ENCODE measurements at regions of chr3 and their contacts with region 1.

Region 1: DNA sequence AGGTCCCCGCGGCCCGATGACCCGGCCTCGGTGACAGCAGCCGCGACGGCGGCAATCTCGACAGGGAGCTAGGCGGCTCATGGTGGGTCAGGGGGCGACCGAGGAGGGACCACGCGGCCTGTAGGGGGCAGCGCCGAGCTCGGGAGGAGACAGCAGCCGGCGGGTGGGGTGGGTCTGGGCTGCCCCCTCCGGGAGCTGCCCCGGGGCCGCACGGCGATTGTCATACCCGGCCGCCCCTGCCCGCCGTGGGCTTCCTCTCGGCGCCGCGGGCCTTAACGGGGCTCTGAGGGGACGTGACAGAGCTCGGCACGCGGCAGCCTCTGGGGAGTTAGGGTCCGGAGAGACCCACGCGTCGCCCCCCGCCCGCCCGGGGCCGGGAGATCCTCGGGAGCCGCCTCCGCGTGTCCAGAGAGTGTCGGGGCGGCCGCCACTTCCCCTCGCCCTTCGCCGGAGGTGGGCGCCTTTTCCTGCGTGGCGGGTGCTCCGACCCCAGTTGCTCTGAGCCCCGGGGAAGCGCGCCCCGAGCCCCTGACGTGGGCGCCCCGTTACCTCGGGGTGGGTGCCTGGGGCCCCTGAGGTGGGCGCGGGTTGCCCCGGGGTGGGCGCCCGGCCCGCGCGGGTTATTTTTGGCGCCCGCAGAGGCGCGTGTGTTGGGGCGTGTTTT is 539 bp upstream of the PLCL2 start:
- DNase-seq: peak; percentile 84
- ATAC-seq: peak; percentile 60
- H3K4me3 ChIP-seq: peak overlapping the region in 4 of 5 experiments; percentile 77 to 98 (median 96)
- H3K4me3 Mint-ChIP-seq: peak overlapping the region; percentile 97
- H3K27ac ChIP-seq: peak overlapping the region; percentile 82 to 90
- H3K27ac Mint-ChIP-seq: peak overlapping the region; percentile 95
- H3K4me1 ChIP-seq: peaks cover 17 to 23% of the 10 kb centered on the region in 2 donors
- H3K4me1 Mint-ChIP-seq: peaks cover 40% of the 10 kb centered on the region
- H3K27me3 ChIP-seq: no peaks in the 10 kb centered on the region
- H3K27me3 Mint-ChIP-seq: no peaks in the 10 kb centered on the region
- CTCF ChIP-seq: peak; percentile 71

Region 2: DNA sequence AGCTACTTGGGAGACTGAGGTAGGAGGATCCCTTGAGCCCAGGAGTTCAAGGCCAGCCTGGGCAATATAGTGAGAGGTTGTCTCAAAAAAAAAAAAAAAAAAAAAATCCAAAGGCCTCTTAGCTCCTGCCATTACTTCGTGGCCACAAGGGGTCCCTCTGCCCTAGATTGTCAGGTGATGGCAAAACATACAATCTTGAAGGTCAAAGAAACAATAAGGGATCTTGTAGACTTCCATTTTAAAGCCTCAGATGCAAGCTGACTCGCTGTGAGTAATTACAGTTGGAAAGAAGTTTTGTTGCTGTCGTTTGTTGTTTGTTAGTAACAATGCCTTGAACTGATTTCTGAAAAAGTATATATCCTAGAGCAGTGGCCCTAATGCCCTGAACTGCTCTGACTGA is 55.4 kb before region 1 on chr3:
- CTCF ChIA-PET with region 1: interaction called, 4 read pairs
- POLR2A ChIA-PET with region 1: interaction called, 3 read pairs
- intact Hi-C with region 1: loop called (anchors 5 kb)
- DNase-seq: peak; percentile 71
- ATAC-seq: peak; percentile 60
- H3K4me3 ChIP-seq: no peak overlapping the region
- H3K4me3 Mint-ChIP-seq: no peak overlapping the region
- H3K27ac ChIP-seq: no peak overlapping the region
- H3K27ac Mint-ChIP-seq: no peak overlapping the region
- H3K4me1 ChIP-seq: peaks cover 11 to 12% of the 10 kb centered on the region in 2 donors
- H3K4me1 Mint-ChIP-seq: peaks cover 15% of the 10 kb centered on the region
- H3K27me3 ChIP-seq: no peaks in the 10 kb centered on the region
- H3K27me3 Mint-ChIP-seq: no peaks in the 10 kb centered on the region
- CTCF ChIP-seq: peak; percentile 62

Region 3: DNA sequence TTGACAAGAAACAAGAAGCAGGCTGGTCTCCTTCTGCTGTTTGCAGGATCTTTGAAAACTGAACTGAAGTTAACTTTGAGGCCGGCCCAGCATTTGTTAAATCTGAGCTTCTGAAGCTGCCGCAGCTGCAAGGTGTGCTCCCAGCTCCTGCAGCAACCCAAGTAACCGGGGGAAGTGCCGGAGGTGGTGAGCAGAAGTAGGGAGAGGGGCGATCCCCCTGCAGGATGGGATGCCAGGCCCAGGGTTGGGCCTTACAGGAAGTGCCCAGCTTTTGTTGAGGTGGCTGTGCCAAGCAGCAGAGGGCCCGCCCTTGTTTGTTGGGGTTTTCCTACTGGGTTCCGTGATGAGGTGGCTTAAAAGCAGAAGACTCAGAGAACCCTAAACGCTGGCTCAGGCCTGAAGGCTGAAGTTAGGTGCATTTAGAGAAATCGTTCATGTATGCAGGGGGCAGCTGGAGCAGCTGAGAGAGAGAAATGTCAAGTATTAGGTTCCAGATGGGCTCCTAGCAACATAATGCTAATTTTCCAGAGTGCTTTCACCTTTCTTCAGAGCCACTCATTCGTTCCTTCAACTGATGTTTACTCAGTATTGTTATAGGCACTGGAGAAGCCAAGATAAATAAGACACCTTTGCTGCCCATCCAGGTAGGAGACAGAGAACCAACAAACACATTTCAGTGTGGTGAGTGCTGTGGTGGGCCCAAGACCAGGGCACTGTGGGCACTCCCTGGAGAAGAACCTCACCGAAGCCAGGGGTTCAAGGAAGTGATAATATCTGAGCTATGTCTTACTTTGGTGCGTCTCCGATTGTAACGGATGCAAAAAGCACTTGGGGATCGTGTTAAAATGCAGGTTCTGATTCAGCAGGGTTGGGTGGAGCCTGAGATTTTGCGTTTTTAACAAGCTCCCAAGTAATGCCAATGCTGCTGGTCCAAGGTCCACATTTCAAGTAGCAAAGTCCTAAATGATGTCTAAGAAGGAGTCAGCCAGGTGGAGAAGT is 41.6 kb before region 1 on chr3:
- CTCF ChIA-PET with region 1: interaction called, 13 read pairs
- POLR2A ChIA-PET with region 1: interaction called, 22 read pairs
- intact Hi-C with region 1: loop called (anchors 1 kb)
- DNase-seq: peak; percentile 90
- ATAC-seq: peak; percentile 89
- H3K4me3 ChIP-seq: peak overlapping the region in 4 of 5 experiments; percentile 12 to 50 (median 36)
- H3K4me3 Mint-ChIP-seq: peak overlapping the region; percentile 65
- H3K27ac ChIP-seq: peak overlapping the region; percentile 93 to 97
- H3K27ac Mint-ChIP-seq: peak overlapping the region; percentile 95
- H3K4me1 ChIP-seq: peaks cover 51 to 52% of the 10 kb centered on the region in 2 donors
- H3K4me1 Mint-ChIP-seq: peaks cover 66% of the 10 kb centered on the region
- H3K27me3 ChIP-seq: no peaks in the 10 kb centered on the region
- H3K27me3 Mint-ChIP-seq: no peaks in the 10 kb centered on the region
- CTCF ChIP-seq: no peak

Region 4: GRCh38 chr3:16897254-16897926 is 13.2 kb after region 1 on chr3:
- CTCF ChIA-PET with region 1: interaction called, 23 read pairs
- POLR2A ChIA-PET with region 1: interaction called, 8 read pairs
- intact Hi-C with region 1: loop called (anchors 1 kb)
- DNase-seq: peak; percentile 77
- ATAC-seq: peak; percentile 88
- H3K4me3 ChIP-seq: peak overlapping the region in 4 of 5 experiments; percentile 1 to 48 (median 12)
- H3K4me3 Mint-ChIP-seq: peak overlapping the region; percentile 75
- H3K27ac ChIP-seq: peak overlapping the region; percentile 45 to 80
- H3K27ac Mint-ChIP-seq: peak overlapping the region; percentile 87
- H3K4me1 ChIP-seq: peaks cover 76 to 92% of the 10 kb centered on the region in 2 donors
- H3K4me1 Mint-ChIP-seq: peaks cover 88% of the 10 kb centered on the region
- H3K27me3 ChIP-seq: no peaks in the 10 kb centered on the region
- H3K27me3 Mint-ChIP-seq: no peaks in the 10 kb centered on the region
- CTCF ChIP-seq: no peak

Region 5: DNA sequence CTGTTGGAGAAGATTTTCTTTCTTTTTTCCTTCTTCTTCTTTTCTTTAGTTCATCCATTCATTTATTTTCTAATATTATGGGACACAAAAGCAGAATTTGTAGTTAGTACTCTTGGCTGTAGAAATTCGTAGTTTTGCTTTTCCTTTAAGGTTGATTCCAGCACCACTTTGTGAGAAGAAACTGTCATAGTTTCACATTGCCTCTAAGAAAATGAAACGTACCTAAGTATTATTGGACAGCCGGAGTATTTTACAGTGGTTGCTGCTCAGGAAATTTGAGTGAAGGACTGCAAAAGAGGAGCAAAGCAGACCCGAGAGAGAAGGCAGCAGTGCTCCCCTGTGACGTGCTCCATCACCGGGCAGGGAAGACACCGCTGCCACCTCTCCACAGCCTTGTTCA is 48.7 kb after region 1 on chr3:
- CTCF ChIA-PET with region 1: interaction called, 3 read pairs
- POLR2A ChIA-PET with region 1: no interaction called
- intact Hi-C with region 1: loop called (anchors 10 kb)
- DNase-seq: no peak
- ATAC-seq: no peak
- H3K4me3 ChIP-seq: no peak overlapping the region
- H3K4me3 Mint-ChIP-seq: no peak overlapping the region
- H3K27ac ChIP-seq: peak overlapping the region in 1 of 2 donors; percentile 33
- H3K27ac Mint-ChIP-seq: peak overlapping the region; percentile 57
- H3K4me1 ChIP-seq: peaks cover 37 to 54% of the 10 kb centered on the region in 2 donors
- H3K4me1 Mint-ChIP-seq: peaks cover 87% of the 10 kb centered on the region
- H3K27me3 ChIP-seq: no peaks in the 10 kb centered on the region
- H3K27me3 Mint-ChIP-seq: no peaks in the 10 kb centered on the region
- CTCF ChIP-seq: no peak

Region 6: DNA sequence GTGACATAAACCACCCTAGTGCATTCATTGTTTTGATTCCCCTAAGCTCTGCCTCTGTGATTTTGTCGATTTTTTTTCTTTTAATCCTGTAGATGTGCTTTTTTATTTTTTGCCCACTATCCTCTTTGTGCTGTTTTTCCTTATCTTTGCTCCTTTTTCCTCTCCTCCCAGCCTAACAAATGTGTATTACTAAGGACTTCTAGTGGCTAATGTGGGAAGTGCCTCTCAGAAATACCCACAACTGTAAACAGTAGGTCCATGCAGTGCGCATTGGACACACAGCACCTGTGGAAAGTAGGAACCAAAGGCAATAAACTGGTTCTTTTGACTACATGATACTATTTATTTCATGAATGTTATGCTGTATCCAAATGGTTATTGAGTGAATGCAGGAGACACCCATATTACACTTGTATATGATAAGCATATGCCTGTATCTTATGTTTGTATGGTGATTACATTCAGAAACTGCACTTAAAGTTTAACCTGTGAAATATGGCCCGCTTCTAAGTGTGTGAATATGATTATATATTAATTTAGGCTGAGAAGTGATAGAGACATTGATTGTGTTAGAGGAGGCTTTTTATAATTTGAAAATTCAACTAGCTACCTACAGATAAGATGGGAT is 148.3 kb after region 1 on chr3:
- CTCF ChIA-PET with region 1: interaction called, 6 read pairs
- POLR2A ChIA-PET with region 1: interaction called, 3 read pairs
- intact Hi-C with region 1: loop called (anchors 5 kb)
- DNase-seq: peak; percentile 19
- ATAC-seq: peak; percentile 28
- H3K4me3 ChIP-seq: no peak overlapping the region
- H3K4me3 Mint-ChIP-seq: no peak overlapping the region
- H3K27ac ChIP-seq: no peak overlapping the region
- H3K27ac Mint-ChIP-seq: no peak overlapping the region
- H3K4me1 ChIP-seq: peaks cover 17 to 25% of the 10 kb centered on the region in 2 donors
- H3K4me1 Mint-ChIP-seq: peaks cover 39% of the 10 kb centered on the region
- H3K27me3 ChIP-seq: no peaks in the 10 kb centered on the region
- H3K27me3 Mint-ChIP-seq: no peaks in the 10 kb centered on the region
- CTCF ChIP-seq: peak; percentile 24

Region 7: GRCh38 chr3:17233398-17233800 is 349.2 kb after region 1 on chr3:
- CTCF ChIA-PET with region 1: interaction called, 11 read pairs
- POLR2A ChIA-PET with region 1: no interaction called
- intact Hi-C with region 1: loop called (anchors 1 kb)
- DNase-seq: peak; percentile 71
- ATAC-seq: peak; percentile 97
- H3K4me3 ChIP-seq: no peak overlapping the region
- H3K4me3 Mint-ChIP-seq: no peak overlapping the region
- H3K27ac ChIP-seq: no peak overlapping the region
- H3K27ac Mint-ChIP-seq: no peak overlapping the region
- H3K4me1 ChIP-seq: peaks cover 4 to 13% of the 10 kb centered on the region in 2 donors
- H3K4me1 Mint-ChIP-seq: peaks cover 20% of the 10 kb centered on the region
- H3K27me3 ChIP-seq: no peaks in the 10 kb centered on the region
- H3K27me3 Mint-ChIP-seq: no peaks in the 10 kb centered on the region
- CTCF ChIP-seq: peak; percentile 86

Region 8: GRCh38 chr3:17329927-17330326 is 445.7 kb after region 1 on chr3:
- CTCF ChIA-PET with region 1: no interaction called
- POLR2A ChIA-PET with region 1: no interaction called
- intact Hi-C with region 1: no loop called
- DNase-seq: no peak
- ATAC-seq: no peak
- H3K4me3 ChIP-seq: no peak overlapping the region
- H3K4me3 Mint-ChIP-seq: no peak overlapping the region
- H3K27ac ChIP-seq: no peak overlapping the region
- H3K27ac Mint-ChIP-seq: no peak overlapping the region
- H3K4me1 ChIP-seq: no peaks in the 10 kb centered on the region
- H3K4me1 Mint-ChIP-seq: no peaks in the 10 kb centered on the region
- H3K27me3 ChIP-seq: no peaks in the 10 kb centered on the region
- H3K27me3 Mint-ChIP-seq: no peaks in the 10 kb centered on the region
- CTCF ChIP-seq: no peak